ENCODE measurements at regions of chr9 and their contacts with region 1.

Region 1: DNA sequence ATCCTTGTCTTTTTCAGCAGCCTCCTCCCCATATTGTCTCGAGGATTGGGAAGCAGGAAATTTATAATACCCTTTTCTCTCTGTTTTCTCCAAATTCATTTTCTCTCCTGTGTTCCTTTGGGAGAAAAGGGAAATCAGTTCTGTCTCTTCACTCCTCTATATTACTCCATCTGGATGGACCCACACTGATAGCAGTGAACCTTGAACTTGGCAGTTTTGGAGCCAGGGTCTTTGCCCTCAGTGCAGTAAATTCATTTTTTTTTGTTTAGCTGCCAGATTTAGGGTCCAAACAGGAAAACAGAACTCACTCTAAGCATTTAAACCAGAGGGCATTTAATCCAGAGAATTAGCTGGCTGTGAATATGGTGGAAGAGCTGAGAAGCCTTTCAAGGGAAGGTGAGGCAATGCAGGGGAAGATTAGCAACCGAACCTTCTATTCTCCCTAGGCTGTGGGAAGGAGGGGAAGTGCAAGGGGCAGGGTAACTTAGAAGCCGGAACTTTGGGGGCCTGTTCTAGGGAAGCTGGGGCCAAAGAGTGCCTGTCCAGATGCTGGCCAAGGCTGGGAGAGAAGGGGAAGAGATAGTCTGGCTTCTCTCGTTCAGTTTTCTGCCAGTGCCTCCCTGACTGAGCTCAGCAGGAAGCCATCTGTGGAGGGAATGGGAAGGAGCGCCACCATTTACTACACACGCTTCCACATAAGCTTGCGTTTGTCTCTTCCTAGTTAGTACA is 16.3 kb upstream of the NPR2 start:
- DNase-seq: peak; percentile 16
- ATAC-seq: peak; percentile 59
- H3K4me3 Mint-ChIP-seq: no peak overlapping the region
- H3K27ac Mint-ChIP-seq: peak overlapping the region; percentile 8
- H3K4me1 Mint-ChIP-seq: peaks cover 18% of the 10 kb centered on the region
- H3K27me3 Mint-ChIP-seq: no peaks in the 10 kb centered on the region
- CTCF ChIP-seq: no peak

Region 2: GRCh38 chr9:35646533-35647265 is 128.4 kb before region 1 on chr9:
- CTCF ChIA-PET with region 1: no interaction called
- POLR2A ChIA-PET with region 1: no interaction called
- DNase-seq: peak; percentile 96
- ATAC-seq: peak; percentile 89
- H3K4me3 Mint-ChIP-seq: peak overlapping the region; percentile 88
- H3K27ac Mint-ChIP-seq: peak overlapping the region; percentile 82
- H3K4me1 Mint-ChIP-seq: peaks cover 43% of the 10 kb centered on the region
- H3K27me3 Mint-ChIP-seq: peaks cover 13% of the 10 kb centered on the region
- CTCF ChIP-seq: peak; percentile 90

Region 3: DNA sequence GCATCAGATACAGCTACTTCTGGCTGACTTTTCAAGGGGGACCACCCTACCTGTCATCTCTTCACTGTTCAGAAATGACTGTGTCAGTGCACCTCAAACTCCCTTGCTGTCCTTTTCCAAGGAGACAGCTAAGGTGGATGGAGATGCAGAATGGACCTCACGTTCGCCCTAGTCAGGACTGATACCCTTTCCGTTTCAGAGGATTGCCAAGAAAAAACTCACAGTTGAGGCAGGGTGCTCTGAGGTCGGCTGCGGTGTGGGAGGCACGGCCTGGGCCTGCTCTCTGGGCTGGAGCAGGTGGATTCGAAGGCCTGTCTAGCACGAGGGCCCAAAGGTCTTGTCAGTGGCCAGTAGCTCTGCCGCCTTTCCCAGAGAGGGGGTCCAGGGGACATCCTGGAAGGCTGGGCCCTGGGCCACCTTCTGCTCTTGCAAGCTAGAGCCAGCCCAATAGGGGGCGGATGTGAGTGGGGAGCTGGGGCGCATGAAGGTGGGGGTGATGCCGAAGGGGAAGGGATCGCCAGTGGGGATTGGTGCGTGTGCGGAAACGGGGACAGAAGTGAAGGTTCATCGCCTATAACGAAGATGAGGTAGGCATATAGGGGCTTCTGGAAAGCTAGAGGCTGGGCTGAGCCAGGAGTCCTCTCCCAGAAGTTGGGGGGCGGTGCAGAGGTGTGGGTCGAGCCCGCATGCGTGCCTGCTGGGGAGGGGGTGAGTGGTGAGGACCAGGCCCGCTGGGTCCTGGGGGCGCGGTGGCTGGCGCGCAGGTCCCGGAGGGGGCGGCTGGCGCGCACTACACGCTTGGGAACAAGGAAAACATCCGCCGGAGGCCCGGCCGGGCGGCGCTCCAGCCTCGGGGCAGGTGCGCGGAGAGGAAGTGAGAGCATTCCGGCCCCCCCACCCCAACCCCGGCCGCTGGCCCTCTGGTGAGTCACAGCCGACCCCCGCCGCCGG is 18.5 kb before region 1 on chr9:
- CTCF ChIA-PET with region 1: interaction called, 14 read pairs
- POLR2A ChIA-PET with region 1: interaction called, 6 read pairs
- DNase-seq: peak; percentile 82
- ATAC-seq: peak; percentile 79
- H3K4me3 Mint-ChIP-seq: peak overlapping the region; percentile 89
- H3K27ac Mint-ChIP-seq: peak overlapping the region; percentile 93
- H3K4me1 Mint-ChIP-seq: peaks cover 26% of the 10 kb centered on the region
- H3K27me3 Mint-ChIP-seq: no peaks in the 10 kb centered on the region
- CTCF ChIP-seq: 0 out of 2 replicates have a peak, but pooled peaks have one; percentile 18

Measured in WTC11 (cell line).